ENCODE measurements at regions of chr18 and their contacts with region 1.

Region 1: DNA sequence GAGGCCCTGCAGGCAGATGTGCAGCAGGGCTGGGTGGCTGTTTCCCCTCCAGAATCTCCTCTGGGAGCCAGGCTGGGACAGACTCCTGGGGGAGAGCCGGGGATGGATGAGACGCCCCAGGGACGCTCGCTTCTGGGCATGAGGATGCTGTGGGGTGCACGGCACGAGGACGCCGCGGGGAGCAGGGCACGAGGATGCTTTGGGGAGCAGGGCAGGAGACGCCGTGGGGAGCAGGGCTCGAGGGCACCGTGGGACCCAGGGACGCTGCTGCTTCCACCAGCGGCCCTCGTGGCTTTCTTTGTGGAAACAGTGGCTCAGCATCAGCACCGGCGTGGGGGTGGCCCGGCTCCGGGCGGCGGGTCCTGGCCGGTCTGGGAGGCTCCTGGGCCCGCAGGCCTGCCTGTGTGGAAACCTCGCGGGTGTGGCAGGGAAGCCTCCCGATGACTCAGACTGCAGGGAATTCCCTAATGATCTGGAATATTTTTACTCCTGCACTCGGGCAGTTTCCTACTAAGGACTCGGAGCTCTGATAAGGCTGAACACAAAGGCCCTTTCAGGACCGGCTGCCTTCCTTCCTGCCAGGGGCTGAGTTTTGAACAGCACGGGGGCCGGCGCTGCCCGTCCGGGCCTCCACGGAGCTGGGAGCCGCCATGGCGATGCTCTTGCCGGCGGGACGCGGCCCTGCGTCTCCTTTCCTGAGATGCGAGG is 62.6 kb downstream of the NFATC1 start:
- DNase-seq: peak; percentile 77 to 80
- ATAC-seq: peak; percentile 75 to 88 (median 84)
- H3K4me3 ChIP-seq: peak overlapping the region in 7 of 10 donors; percentile 14 to 37 (median 32)
- H3K27ac ChIP-seq: peak overlapping the region; percentile 56 to 91 (median 80)
- H3K4me1 ChIP-seq: peaks cover 17 to 50% (median 41%) of the 10 kb centered on the region in 9 donors
- H3K27me3 ChIP-seq: no peaks in the 10 kb centered on the region
- CTCF ChIP-seq: no peak

Region 2: GRCh38 chr18:79393635-79394533 is 64.4 kb before region 1 on chr18:
- intact Hi-C with region 1: loop called in 4 of 10 experiments (anchors 2 to 5 kb)
- DNase-seq: peak; percentile 96 to 97
- ATAC-seq: peak; percentile 71 to 86 (median 83)
- H3K4me3 ChIP-seq: peak overlapping the region; percentile 24 to 65 (median 51)
- H3K27ac ChIP-seq: peak overlapping the region; percentile 90 to 98 (median 94)
- H3K4me1 ChIP-seq: peaks cover 7 to 44% (median 28%) of the 10 kb centered on the region in 9 donors
- H3K27me3 ChIP-seq: peaks cover 0 to 76% (median 0%) of the 10 kb centered on the region in 7 donors
- CTCF ChIP-seq: no peak

Region 3: DNA sequence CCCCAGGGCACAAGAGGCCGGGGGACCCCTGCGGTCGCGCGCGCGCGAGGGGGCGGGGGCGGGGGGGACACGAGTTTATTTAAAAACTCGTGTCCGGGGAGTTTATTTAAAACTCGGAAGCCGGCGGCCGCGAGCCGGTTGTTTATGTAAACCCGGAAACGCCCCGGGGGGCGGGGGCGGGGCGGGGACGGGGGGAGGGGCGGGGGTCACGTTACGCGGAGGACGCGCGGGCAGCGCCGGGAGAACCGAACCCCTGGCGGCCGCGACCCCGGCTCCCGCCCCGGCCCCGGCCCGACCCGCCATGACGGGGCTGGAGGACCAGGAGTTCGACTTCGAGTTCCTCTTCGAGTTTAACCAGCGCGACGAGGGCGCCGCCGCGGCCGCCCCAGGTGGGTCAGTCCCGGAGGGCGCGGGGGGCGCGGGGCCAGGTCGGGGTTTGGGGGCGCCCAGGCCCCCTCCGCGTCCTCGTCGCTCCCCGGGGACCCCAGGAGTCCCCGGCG is 58.1 kb before region 1 on chr18:
- intact Hi-C with region 1: loop called in 7 of 10 experiments (anchors 2 to 10 kb)
- DNase-seq: peak; percentile 54 to 84
- ATAC-seq: peak in 3 of 8 donors; percentile 21 to 32 (median 25)
- H3K4me3 ChIP-seq: peak overlapping the region; percentile 51 to 92 (median 83)
- H3K27ac ChIP-seq: peak overlapping the region; percentile 79 to 95 (median 86)
- H3K4me1 ChIP-seq: peaks cover 30 to 75% (median 58%) of the 10 kb centered on the region in 9 donors
- H3K27me3 ChIP-seq: peaks cover 0 to 16% (median 0%) of the 10 kb centered on the region in 7 donors
- CTCF ChIP-seq: peak in 1 of 9 donors; percentile 10

Region 4: GRCh38 chr18:79405781-79406575 is 52.3 kb before region 1 on chr18:
- intact Hi-C with region 1: loop called in 4 of 10 experiments (anchors 2 to 10 kb)
- DNase-seq: peak; percentile 59 to 74
- ATAC-seq: peak in 7 of 8 donors; percentile 29 to 77 (median 48)
- H3K4me3 ChIP-seq: peak overlapping the region in 3 of 10 donors; percentile 19 to 47 (median 26)
- H3K27ac ChIP-seq: peak overlapping the region in 9 of 10 donors; percentile 17 to 90 (median 63)
- H3K4me1 ChIP-seq: peaks cover 24 to 59% (median 54%) of the 10 kb centered on the region in 9 donors
- H3K27me3 ChIP-seq: no peaks in the 10 kb centered on the region
- CTCF ChIP-seq: peak in 1 of 9 donors; percentile 6

Region 5: GRCh38 chr18:79507076-79507545 is 48.8 kb after region 1 on chr18:
- intact Hi-C with region 1: loop called in 3 of 10 experiments (anchors 1 to 2 kb)
- DNase-seq: peak; percentile 83 to 84
- ATAC-seq: peak; percentile 85 to 96 (median 92)
- H3K4me3 ChIP-seq: peak overlapping the region in 9 of 10 donors; percentile 24 to 52 (median 42)
- H3K27ac ChIP-seq: peak overlapping the region; percentile 80 to 98 (median 94)
- H3K4me1 ChIP-seq: peaks cover 13 to 41% (median 29%) of the 10 kb centered on the region in 9 donors
- H3K27me3 ChIP-seq: no peaks in the 10 kb centered on the region
- CTCF ChIP-seq: no peak

Measured in heart right ventricle (tissue), 16 donors.